Activated T-helper 2 cell treated with anti-CD3 and anti-CD28 coated beads, Interferon-gamma antibody, Interleukin-2, Interleukin-4, amounts not matched to agents 10 μg/mL and 5 μg/mL and 100 μg/mL, durations not matched to agents 14 hours and 24 hours and 36 hours (primary cell): ENCODE measurements at regions of chr3 and their contacts with region 1.

Region 1: GRCh38 chr3:64150623-64151207 is 74.6 kb downstream of the PRICKLE2 start:
- DNase-seq: no peak
- H3K4me3 Mint-ChIP-seq: no peak overlapping the region
- H3K27ac Mint-ChIP-seq: no peak overlapping the region
- H3K4me1 Mint-ChIP-seq: no peaks in the 10 kb centered on the region
- H3K27me3 Mint-ChIP-seq: no peaks in the 10 kb centered on the region

Region 2: GRCh38 chr3:64056606-64057180 is 94.0 kb before region 1 on chr3:
- intact Hi-C with region 1: loop called (anchors 10 kb)
- DNase-seq: no peak
- H3K4me3 Mint-ChIP-seq: no peak overlapping the region
- H3K27ac Mint-ChIP-seq: no peak overlapping the region
- H3K4me1 Mint-ChIP-seq: no peaks in the 10 kb centered on the region
- H3K27me3 Mint-ChIP-seq: peaks cover 19% of the 10 kb centered on the region